GM10248 (cell line): ENCODE measurements at regions of chr9 and their contacts with region 1.

Region 1: DNA sequence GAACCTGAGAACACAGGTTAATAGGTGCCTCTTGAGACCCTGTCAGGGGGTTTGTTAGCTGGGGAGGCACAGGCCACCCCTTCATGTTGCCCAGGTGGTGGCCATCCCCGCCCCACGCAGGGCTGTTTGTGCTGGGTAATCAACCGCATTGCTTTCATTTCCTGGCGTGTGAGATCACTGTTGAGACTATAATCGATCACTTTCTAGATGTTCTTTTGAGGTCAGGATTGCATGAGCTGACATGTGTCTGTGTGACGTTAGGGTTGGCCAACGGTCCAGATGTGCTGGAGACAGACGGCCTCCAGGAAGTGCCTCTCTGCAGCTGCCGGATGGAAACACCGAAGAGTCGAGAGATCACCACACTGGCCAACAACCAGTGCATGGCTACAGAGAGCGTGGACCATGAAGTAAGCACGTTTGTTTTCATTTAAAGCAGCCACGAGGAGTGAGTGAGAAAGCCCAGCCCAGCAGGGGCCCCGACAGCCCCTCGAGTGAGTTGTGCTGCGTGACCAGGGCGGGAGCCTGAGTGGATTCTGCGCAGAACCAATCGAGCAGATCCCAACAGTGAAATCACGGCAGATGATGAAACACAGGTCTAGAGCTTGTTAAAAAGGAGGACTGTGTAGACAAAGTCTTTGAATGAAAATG is 115.0 kb upstream of the CACNA1B start:
- DNase-seq: peak; percentile 80
- CTCF ChIP-seq: no peak

Region 2: GRCh38 chr9:137745541-137745991 is 17.0 kb before region 1 on chr9:
- CTCF ChIA-PET with region 1: interaction called, 8 read pairs
- POLR2A ChIA-PET with region 1: interaction called, 12 read pairs
- DNase-seq: peak; percentile 76
- CTCF ChIP-seq: no peak